Activated B cell treated with CpG ODN at 0.5 μM for 24 hours (primary cell): ENCODE measurements at regions of chr4 and their contacts with region 1.

Region 1: GRCh38 chr4:55395529-55396307 is at the start of gene TMEM165:
- DNase-seq: peak; percentile 89
- ATAC-seq: peak; percentile 92
- H3K4me3 Mint-ChIP-seq: peak within 1 kb of the TSS; percentile 91
- H3K27ac Mint-ChIP-seq: peak within 1 kb of the TSS; percentile 95
- H3K4me1 Mint-ChIP-seq: peaks cover 42% of the 10 kb centered on the region
- H3K27me3 Mint-ChIP-seq: no peaks in the 10 kb centered on the region
- CTCF ChIP-seq: no peak
- total RNA-seq, gene TMEM165: 80.3 and 90.2 TPM in 2 replicates

Region 2: DNA sequence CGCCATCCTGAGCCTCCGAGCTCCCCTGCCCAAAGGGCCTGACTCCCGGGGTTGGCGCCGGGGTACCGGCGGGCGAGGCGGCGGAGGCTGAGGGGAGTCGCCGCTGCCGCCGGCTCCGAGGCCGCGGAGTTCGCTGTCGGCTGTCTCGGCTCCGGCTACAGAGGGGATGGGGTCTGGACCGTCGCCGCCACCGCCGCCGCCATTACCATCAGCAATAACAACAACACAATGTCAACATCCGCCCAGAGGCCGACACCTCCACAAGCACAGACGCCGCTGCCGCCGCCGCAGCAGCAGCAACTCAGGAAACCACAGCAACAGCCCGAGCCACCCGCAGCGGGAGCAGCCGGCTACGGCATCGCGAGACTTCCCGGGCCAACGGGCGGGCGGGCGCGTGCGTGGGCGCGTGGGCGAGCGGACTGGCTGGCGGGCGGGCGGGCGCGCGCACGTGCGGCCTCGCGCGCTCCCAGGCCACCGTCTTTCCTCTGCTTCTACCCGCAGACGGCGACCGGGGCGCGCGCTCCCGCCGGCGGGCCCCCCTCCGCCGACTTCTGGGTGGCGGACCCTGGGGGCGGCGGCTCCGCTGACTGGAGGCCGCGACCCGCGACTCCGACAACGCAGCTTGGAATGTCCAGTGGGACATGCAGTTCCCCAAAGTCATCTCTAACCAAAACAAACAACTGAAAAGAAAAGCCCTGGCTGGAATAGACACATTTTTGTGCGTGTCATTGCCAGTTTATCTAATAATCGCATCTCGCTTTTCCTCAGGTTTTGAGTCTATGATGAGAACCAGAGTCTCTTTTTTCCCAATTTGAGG is 1331.2 kb before region 1 on chr4 and contains the start of gene CHIC2:
- CTCF ChIA-PET with region 1: no interaction called
- POLR2A ChIA-PET with region 1: no interaction called
- intact Hi-C with region 1: loop called (anchors 1 kb)
- DNase-seq: peak; percentile 95
- ATAC-seq: peak; percentile 90
- H3K4me3 Mint-ChIP-seq: peak within 1 kb of the TSS; percentile 92
- H3K27ac Mint-ChIP-seq: peak within 1 kb of the TSS; percentile 87
- H3K4me1 Mint-ChIP-seq: peaks cover 47% of the 10 kb centered on the region
- H3K27me3 Mint-ChIP-seq: peaks cover 3% of the 10 kb centered on the region
- CTCF ChIP-seq: no peak
- total RNA-seq, gene CHIC2: 17.5 and 21.6 TPM in 2 replicates

Region 3: DNA sequence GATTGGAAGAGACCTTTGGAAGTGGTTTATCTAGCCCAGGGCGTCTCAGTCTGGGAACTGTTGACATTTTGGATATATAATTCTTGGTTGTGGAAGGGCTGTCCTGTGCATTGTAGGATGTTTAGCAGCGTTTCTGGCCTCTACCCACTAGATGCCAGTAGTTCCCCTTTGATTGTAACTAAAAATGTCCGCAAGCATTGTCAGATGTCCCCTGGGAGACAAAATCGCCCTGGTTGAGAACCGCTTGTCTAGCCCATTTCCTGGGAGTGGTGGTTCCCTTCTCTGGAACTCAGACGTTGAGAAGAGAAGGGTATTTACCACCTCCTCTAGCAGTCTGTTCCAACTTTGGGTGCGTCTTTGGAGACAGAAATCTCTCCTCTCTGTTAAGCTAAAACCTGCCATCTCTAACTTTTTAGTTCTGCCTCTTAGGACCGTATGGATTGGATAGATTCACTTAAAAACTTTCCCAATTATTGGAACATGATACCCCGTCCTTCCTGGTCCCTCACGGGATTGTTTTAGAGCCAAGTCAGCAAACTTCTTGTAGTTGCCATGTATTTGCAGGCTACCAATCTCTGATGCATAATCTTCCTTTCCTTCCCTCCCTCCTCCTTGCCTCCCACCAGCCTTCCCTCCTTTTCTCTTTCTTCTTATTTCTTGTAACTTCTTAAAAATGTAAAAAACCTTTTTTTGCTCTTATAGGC is 13.9 kb after region 1 on chr4:
- CTCF ChIA-PET with region 1: interaction called, 9 read pairs
- POLR2A ChIA-PET with region 1: interaction called, 5 read pairs
- intact Hi-C with region 1: loop called (anchors 1 kb)
- DNase-seq: no peak
- ATAC-seq: peak; percentile 90
- H3K4me3 Mint-ChIP-seq: peak overlapping the region; percentile 32
- H3K27ac Mint-ChIP-seq: peak overlapping the region; percentile 76
- H3K4me1 Mint-ChIP-seq: peaks cover 25% of the 10 kb centered on the region
- H3K27me3 Mint-ChIP-seq: no peaks in the 10 kb centered on the region
- CTCF ChIP-seq: no peak

Region 4: DNA sequence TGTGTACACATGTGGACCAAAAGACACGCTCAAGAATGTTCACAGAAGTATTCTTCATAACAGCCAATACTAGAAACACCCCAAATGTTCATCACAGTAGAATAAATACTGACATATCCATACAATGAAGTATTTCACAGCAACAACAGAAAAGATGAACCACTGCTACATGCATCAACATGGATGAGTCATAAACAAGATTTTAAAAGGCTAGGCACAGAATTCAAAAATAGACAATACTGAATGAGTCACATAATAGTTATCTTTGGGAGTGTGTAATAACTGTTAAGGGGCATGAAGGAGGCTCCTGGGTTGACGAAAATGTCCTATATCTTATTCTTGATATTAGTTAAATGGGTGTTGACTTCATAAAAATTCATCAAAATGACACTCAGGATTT is 107.4 kb after region 1 on chr4:
- CTCF ChIA-PET with region 1: no interaction called
- POLR2A ChIA-PET with region 1: no interaction called
- intact Hi-C with region 1: no loop called
- DNase-seq: no peak
- ATAC-seq: no peak
- H3K4me3 Mint-ChIP-seq: no peak overlapping the region
- H3K27ac Mint-ChIP-seq: no peak overlapping the region
- H3K4me1 Mint-ChIP-seq: peaks cover 3% of the 10 kb centered on the region
- H3K27me3 Mint-ChIP-seq: no peaks in the 10 kb centered on the region
- CTCF ChIP-seq: no peak

Region 5: DNA sequence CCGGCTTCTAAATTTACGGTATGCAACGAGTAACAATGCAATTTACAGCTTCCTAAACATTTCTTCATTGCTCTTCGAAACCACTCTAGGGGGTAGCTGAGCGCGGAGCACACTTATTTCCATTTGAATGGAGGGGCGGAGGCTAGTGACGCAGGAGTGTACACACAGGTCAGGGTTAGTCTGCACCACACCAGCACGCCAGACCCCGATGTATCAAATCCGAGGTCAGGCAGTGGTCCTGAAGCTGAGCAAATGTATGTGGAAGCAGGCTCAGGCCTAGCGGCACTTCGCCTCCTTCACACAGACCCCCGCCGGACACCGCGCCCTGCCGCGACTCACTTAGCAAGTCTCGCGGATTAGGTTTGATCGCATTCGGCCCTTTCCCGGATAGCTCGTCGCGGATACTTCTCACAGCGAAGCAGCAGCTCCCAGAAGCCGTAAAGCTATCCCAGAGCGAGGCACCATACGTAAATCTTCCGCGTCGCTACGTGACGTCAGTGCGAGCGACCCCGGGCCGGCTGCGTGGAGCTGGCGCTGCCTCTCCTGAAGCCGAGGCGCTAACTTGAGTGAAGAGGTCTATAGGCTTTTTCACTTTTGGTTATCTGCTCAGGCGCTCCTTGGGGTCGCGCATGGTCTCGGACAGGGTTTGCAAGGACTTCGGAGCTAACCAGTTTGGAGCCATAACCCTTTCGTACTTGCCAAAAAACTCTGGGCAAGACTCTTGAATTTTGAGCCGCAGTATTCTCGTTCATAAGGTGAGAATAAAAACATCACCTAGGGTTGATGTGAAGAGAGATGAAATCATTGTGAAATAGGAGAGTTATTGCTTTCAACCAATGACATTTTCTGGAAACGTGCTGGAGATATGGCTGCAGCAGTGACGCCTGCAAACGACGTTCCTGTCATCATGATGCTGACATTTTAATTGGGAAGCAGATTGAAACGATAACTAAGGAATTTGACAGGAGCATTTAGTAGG is 991.6 kb after region 1 on chr4 and contains the start of gene AASDH:
- CTCF ChIA-PET with region 1: no interaction called
- POLR2A ChIA-PET with region 1: interaction called, 10 read pairs
- intact Hi-C with region 1: loop called (anchors 2 kb)
- DNase-seq: peak; percentile 96
- ATAC-seq: peak; percentile 90
- H3K4me3 Mint-ChIP-seq: peak within 1 kb of the TSS; percentile 93
- H3K27ac Mint-ChIP-seq: peak within 1 kb of the TSS; percentile 99
- H3K4me1 Mint-ChIP-seq: peaks cover 27% of the 10 kb centered on the region
- H3K27me3 Mint-ChIP-seq: no peaks in the 10 kb centered on the region
- CTCF ChIP-seq: no peak
- total RNA-seq, gene AASDH: 12.8 and 14.2 TPM in 2 replicates

Region 6: DNA sequence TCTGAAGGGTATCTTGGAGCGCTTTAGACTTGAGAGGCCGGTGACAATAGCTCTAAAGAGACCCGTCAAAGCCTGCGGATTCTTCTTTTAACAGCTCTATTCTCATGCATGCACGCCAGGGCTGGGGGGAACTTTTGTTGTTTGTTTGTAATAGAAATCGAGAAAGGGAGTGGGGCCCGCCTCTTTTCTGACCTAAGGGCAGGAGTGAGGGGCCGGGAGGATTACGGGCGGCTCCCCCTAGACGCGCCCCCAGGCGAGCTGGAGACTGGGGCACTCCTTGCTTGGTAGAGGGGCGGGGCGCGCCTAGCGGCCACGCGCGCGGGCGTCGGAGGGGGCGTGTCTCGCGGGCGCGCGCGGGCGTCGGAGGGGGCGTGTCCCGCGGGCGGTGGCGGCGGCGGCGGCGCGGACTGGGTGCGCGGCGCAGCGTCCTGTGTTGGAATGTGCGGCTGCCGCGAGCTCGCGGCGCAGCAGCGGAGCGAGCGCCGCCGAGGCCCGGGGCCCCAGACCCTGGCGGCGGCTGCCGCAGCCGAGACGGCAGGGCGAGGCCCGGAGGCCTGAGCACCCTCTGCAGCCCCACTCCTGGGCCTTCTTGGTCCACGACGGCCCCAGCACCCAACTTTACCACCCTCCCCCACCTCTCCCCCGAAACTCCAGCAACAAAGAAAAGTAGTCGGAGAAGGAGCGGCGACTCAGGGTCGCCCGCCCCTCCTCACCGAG is 1511.9 kb after region 1 on chr4 and contains the start of gene REST:
- CTCF ChIA-PET with region 1: no interaction called
- POLR2A ChIA-PET with region 1: interaction called, 6 read pairs
- intact Hi-C with region 1: loop called (anchors 2 kb)
- DNase-seq: peak; percentile 90
- ATAC-seq: peak; percentile 59
- H3K4me3 Mint-ChIP-seq: peak within 1 kb of the TSS; percentile 91
- H3K27ac Mint-ChIP-seq: peak within 1 kb of the TSS; percentile 77
- H3K4me1 Mint-ChIP-seq: peaks cover 41% of the 10 kb centered on the region
- H3K27me3 Mint-ChIP-seq: no peaks in the 10 kb centered on the region
- CTCF ChIP-seq: no peak
- total RNA-seq, gene REST: 48.3 and 49.1 TPM in 2 replicates